ENCODE measurements at regions of chr1 and their contacts with region 1.

Region 1: GRCh38 chr1:93846211-93846991 is 32.6 kb downstream of the DNTTIP2 start:
- DNase-seq: peak; percentile 80
- ATAC-seq: peak; percentile 52
- H3K4me3 ChIP-seq: peak overlapping the region; percentile 82
- H3K27ac ChIP-seq: peak overlapping the region; percentile 93
- H3K4me1 ChIP-seq: peaks cover 42% of the 10 kb centered on the region
- H3K27me3 ChIP-seq: no peaks in the 10 kb centered on the region
- CTCF ChIP-seq: peak; percentile 30; the same call in 1 of the 2 replicates

Region 2: GRCh38 chr1:93304716-93305138 is 541.7 kb before region 1 on chr1:
- CTCF ChIA-PET with region 1: interaction called, 4 read pairs
- POLR2A ChIA-PET with region 1: no interaction called
- intact Hi-C with region 1: loop called (anchors 10 kb)
- DNase-seq: peak; percentile 86
- ATAC-seq: peak; percentile 75
- H3K4me3 ChIP-seq: no peak overlapping the region
- H3K27ac ChIP-seq: no peak overlapping the region
- H3K4me1 ChIP-seq: no peaks in the 10 kb centered on the region; the same call in 1 of the 2 replicates
- H3K27me3 ChIP-seq: no peaks in the 10 kb centered on the region
- CTCF ChIP-seq: peak; percentile 95

Region 3: DNA sequence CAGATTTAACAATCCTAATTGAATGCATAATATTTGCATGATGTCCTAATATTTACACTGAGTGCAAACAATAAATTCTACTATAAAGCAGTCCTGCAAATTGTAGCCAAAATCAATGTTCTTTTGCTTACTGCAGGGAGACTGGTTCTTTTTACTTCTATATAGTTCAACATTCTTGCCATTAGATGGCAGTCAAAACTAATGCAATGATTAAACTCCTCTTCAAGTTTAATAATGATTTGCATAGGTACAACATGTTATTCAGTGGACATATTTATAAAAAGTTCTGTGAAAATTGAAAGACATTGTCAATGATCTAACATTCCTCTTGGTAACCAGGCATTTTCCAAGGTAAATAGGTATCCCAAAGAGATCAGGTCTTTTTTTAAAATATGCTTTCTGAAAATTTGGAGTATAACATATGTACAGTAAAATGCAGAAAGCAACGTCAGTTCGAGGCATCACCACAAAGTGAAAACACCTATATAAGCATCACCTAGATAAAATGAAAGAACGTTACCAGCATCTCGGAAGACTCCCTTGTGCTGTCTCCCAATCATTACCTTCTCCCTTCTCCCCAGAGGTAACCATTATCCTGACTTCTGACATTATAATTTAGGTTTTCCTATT is 408.3 kb before region 1 on chr1:
- CTCF ChIA-PET with region 1: no interaction called
- POLR2A ChIA-PET with region 1: no interaction called
- intact Hi-C with region 1: loop called (anchors 2 kb)
- DNase-seq: peak; percentile 84
- ATAC-seq: peak; percentile 75
- H3K4me3 ChIP-seq: peak overlapping the region; percentile 52
- H3K27ac ChIP-seq: no peak overlapping the region
- H3K4me1 ChIP-seq: peaks cover 17% of the 10 kb centered on the region
- H3K27me3 ChIP-seq: no peaks in the 10 kb centered on the region
- CTCF ChIP-seq: peak; percentile 83

Region 4: DNA sequence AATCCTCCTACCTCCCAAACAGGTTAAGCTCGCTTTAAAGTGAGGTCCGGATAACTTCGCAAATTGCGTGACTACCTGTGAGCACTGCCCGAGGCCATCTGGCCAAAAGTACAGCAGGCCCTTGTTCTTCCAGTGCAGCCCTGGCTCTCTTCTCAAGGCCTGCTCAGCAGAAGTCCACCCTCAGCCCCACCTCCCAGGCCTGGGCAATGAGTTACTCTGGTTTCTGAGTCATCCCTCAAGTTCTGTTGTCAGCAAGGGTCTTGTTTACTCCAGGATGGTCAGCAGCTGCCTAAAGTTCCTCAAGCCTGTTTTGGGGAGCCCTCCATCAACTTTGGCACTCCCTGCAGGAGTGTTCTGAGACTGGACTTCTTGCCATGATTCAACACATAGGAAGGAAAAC is 266.5 kb before region 1 on chr1:
- CTCF ChIA-PET with region 1: interaction called, 9 read pairs
- POLR2A ChIA-PET with region 1: no interaction called
- intact Hi-C with region 1: loop called (anchors 10 kb)
- DNase-seq: peak; percentile 90
- ATAC-seq: peak; percentile 67
- H3K4me3 ChIP-seq: no peak overlapping the region
- H3K27ac ChIP-seq: peak overlapping the region; percentile 97
- H3K4me1 ChIP-seq: peaks cover 59% of the 10 kb centered on the region
- H3K27me3 ChIP-seq: no peaks in the 10 kb centered on the region
- CTCF ChIP-seq: no peak

Region 5: GRCh38 chr1:93672069-93672468 is 174.3 kb before region 1 on chr1:
- CTCF ChIA-PET with region 1: interaction called, 12 read pairs
- POLR2A ChIA-PET with region 1: interaction called, 15 read pairs
- intact Hi-C with region 1: loop called (anchors 1 kb)
- DNase-seq: peak; percentile 93
- ATAC-seq: peak; percentile 28
- H3K4me3 ChIP-seq: peak overlapping the region; percentile 43; the same call in 1 of the 2 replicates
- H3K27ac ChIP-seq: peak overlapping the region; percentile 99
- H3K4me1 ChIP-seq: peaks cover 94% of the 10 kb centered on the region
- H3K27me3 ChIP-seq: no peaks in the 10 kb centered on the region
- CTCF ChIP-seq: no peak

Region 6: GRCh38 chr1:93909146-93910050 is 63.0 kb after region 1 on chr1 and contains the start of gene GCLM:
- CTCF ChIA-PET with region 1: interaction called, 7 read pairs
- POLR2A ChIA-PET with region 1: interaction called, 4 read pairs
- intact Hi-C with region 1: loop called (anchors 1 kb)
- DNase-seq: peak; percentile 97
- ATAC-seq: peak; percentile 92
- H3K4me3 ChIP-seq: peak within 1 kb of the TSS; percentile 85
- H3K27ac ChIP-seq: peak within 1 kb of the TSS; percentile 70
- H3K4me1 ChIP-seq: peaks cover 33% of the 10 kb centered on the region
- H3K27me3 ChIP-seq: no peaks in the 10 kb centered on the region
- CTCF ChIP-seq: peak; percentile 78
- total RNA-seq, gene GCLM: 26.0 and 26.3 TPM in 2 replicates

Region 7: GRCh38 chr1:94081566-94082344 is 235.4 kb after region 1 on chr1:
- CTCF ChIA-PET with region 1: no interaction called
- POLR2A ChIA-PET with region 1: no interaction called
- intact Hi-C with region 1: no loop called
- DNase-seq: peak; percentile 86
- ATAC-seq: peak; percentile 96
- H3K4me3 ChIP-seq: no peak overlapping the region
- H3K27ac ChIP-seq: no peak overlapping the region
- H3K4me1 ChIP-seq: peaks cover 12% of the 10 kb centered on the region
- H3K27me3 ChIP-seq: no peaks in the 10 kb centered on the region
- CTCF ChIP-seq: no peak